Cardiac septum (tissue), 1 donor: ENCODE measurements at regions of chr2 and their contacts with region 1.

Region 1: DNA sequence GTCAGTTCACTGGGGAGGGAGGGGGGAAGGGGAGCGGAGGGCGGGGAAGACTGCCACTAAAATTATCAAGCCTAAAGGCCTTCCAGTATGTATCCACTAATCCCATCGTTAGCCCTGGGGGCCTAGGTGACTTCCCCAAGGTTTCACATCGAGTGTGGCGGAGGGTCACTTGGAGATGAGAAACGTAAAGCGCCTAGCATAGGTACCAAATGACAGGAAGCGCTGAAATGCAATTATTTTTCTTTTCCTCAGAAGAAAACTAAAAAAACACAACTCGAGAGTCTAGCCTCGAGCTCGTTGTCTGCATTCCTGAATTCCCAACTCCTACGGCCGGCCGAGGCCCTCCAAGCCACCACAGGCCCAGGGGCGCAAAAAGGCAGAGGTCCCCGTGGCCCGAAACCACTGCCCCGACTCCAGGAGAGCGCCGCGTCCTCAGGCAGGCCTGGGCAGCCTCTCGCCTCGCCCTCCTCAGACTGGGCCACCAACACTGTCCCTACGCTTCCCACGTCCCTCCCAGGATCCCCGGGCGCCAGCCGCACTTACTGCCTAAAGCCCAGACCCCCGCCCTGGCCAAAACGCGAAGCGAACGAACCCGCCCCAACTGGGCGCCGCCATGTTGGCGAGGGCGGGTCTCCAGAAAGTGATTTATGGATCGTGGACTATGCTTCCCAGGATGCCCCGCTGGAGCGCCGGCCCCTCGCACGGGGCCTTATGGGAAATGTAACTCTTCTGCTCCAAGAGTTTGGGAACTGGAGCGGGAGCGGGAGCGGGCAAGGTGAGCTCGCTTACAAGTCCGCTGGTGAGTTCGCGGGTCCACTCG is at the start of gene USP40:
- DNase-seq: peak; percentile 89
- total RNA-seq, gene USP40: 23.8 TPM

Region 2: DNA sequence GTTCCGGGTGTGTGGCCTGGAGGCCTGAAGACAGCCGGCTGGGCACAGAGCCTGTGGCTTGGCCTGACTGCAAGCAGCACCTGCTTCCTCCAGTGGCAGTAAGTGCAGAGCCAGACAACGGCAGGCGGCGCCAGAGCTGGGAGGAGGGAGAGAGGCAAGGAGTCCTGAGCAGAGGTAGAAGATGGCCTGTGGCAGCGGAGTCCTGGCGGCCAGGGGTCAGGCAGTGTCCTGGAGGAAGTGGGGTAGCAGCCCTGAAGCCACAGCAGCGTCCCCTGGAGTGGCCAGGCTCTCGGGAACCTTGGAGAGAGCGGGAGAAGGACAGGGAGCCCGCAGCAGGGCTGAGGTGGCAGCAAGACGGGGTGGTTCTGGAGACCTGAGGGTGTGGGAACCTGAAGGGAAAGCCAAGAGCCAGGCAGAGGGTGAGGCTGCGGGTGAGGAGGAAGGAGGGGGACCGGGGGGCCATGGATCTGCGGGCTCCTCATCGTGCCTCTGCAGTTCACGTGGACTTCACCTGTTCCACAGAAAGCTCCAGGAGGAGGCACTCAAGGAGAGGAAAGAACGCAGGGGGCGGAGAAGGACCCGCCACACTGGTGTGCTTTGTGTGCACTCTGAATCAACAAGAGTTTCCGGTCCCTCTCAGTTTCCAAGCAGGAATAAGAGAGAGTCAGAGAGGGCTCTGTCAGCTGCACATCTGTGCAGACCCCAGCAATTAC is 85.7 kb before region 1 on chr2:
- intact Hi-C with region 1: loop called (anchors 10 kb)
- DNase-seq: peak; percentile 74